WTC11 (cell line): ENCODE measurements at regions of chr3 and their contacts with region 1.

Region 1: GRCh38 chr3:98593046-98593936 is at the start of gene CPOX:
- DNase-seq: peak; percentile 88
- ATAC-seq: peak; percentile 94
- H3K4me3 Mint-ChIP-seq: peak within 1 kb of the TSS; percentile 96
- H3K27ac Mint-ChIP-seq: peak within 1 kb of the TSS; percentile 98
- H3K4me1 Mint-ChIP-seq: peaks cover 31% of the 10 kb centered on the region
- H3K27me3 Mint-ChIP-seq: no peaks in the 10 kb centered on the region
- CTCF ChIP-seq: no peak
- total RNA-seq, gene CPOX: 31.5 to 33.4 TPM (median 33.1 TPM) in 3 replicates

Region 2: GRCh38 chr3:98612587-98612986 is 19.3 kb after region 1 on chr3:
- CTCF ChIA-PET with region 1: interaction called, 14 read pairs
- POLR2A ChIA-PET with region 1: no interaction called
- DNase-seq: peak; percentile 56
- ATAC-seq: peak; percentile 97
- H3K4me3 Mint-ChIP-seq: no peak overlapping the region
- H3K27ac Mint-ChIP-seq: no peak overlapping the region
- H3K4me1 Mint-ChIP-seq: 0 out of 2 replicates have a peak, but pooled peaks cover 8% of the 10 kb centered on the region
- H3K27me3 Mint-ChIP-seq: no peaks in the 10 kb centered on the region
- CTCF ChIP-seq: peak; percentile 30; the same call in 1 of the 2 replicates

Region 3: GRCh38 chr3:98692787-98693473 is 99.6 kb after region 1 on chr3:
- CTCF ChIA-PET with region 1: no interaction called
- POLR2A ChIA-PET with region 1: no interaction called
- DNase-seq: no peak
- ATAC-seq: no peak
- H3K4me3 Mint-ChIP-seq: no peak overlapping the region
- H3K27ac Mint-ChIP-seq: no peak overlapping the region; the same call in 1 of the 2 replicates
- H3K4me1 Mint-ChIP-seq: no peaks in the 10 kb centered on the region
- H3K27me3 Mint-ChIP-seq: no peaks in the 10 kb centered on the region; the same call in 1 of the 2 replicates
- CTCF ChIP-seq: no peak